PC-9 (cell line): ENCODE measurements at regions of chr4 and their contacts with region 1.

Region 1: DNA sequence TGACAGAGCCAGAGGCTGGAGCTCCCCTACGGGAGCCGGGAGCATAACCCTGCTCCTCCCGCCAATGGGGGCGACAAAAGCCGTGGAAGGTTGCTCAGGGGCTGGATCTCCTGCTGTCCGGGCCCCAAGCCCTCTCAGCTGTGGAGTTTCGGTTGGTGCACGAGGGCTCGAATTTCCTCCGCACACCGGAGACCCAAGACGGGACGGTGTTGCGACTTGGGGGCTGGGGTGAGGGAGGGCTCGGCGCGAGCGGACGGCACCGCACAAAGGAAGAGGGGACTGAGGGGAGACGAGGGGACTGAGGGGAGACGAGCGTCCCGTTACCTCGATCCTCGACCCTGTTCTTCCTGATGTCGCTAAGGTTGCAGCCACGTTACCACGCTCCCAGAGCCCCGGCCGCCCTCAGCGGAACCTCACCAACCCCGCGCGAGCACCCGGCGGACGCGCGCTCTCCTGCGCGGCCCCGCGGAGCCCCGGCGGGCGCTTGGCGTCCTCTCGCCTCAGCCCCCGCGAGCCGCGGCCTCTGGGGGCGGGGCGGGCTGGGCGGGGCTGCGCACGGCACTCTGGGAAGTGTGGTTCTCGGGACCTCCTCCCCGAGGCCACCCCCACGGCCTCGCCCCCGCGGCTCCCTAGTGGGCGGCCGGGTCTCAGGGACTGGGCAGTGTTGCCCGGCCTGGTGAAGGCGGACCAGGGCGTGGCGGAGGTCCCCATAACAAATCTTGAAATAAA is at the start of gene KLHL8:
- DNase-seq: peak; percentile 79 to 92
- H3K4me3 ChIP-seq: peak within 1 kb of the TSS; percentile 93
- H3K27ac ChIP-seq: peak within 1 kb of the TSS; percentile 78
- H3K4me1 ChIP-seq: peaks cover 7% of the 10 kb centered on the region
- H3K27me3 ChIP-seq: no peaks in the 10 kb centered on the region
- CTCF ChIP-seq: no peak
- total RNA-seq, gene KLHL8: 8.5 and 10.4 TPM in 2 replicates

Region 2: DNA sequence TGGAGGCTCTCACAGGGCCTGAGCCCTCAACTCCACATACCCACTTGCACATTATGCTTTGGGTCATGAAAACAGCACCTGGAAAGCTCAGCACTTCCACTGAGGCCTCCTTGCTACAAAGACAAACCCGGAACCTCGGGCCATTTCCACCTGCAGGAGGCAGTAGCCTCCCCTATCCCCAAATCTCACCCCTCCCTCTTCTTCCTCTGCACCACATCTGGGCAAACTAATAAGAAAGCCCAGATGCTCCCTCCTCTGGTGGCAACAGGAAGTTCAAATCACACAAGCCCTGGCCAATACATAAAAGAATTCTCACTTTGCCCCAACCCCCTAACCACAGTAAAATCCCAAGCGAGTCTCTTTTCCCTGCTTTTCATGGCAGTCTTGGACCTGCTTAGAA is 996.8 kb before region 1 on chr4:
- CTCF ChIA-PET with region 1: no interaction called
- POLR2A ChIA-PET with region 1: no interaction called
- intact Hi-C with region 1: no loop called
- DNase-seq: no peak
- H3K4me3 ChIP-seq: no peak overlapping the region
- H3K27ac ChIP-seq: no peak overlapping the region
- H3K4me1 ChIP-seq: no peaks in the 10 kb centered on the region
- H3K27me3 ChIP-seq: no peaks in the 10 kb centered on the region
- CTCF ChIP-seq: peak; percentile 63

Region 3: GRCh38 chr4:86944964-86945781 is 275.1 kb before region 1 on chr4:
- CTCF ChIA-PET with region 1: no interaction called
- POLR2A ChIA-PET with region 1: interaction called, 11 read pairs
- intact Hi-C with region 1: no loop called
- DNase-seq: no peak
- H3K4me3 ChIP-seq: no peak overlapping the region
- H3K27ac ChIP-seq: no peak overlapping the region
- H3K4me1 ChIP-seq: peaks cover 14% of the 10 kb centered on the region
- H3K27me3 ChIP-seq: no peaks in the 10 kb centered on the region
- CTCF ChIP-seq: no peak

Region 4: GRCh38 chr4:87235020-87235671 is 14.9 kb after region 1 on chr4:
- CTCF ChIA-PET with region 1: interaction called, 17 read pairs
- POLR2A ChIA-PET with region 1: no interaction called
- intact Hi-C with region 1: no loop called
- DNase-seq: no peak
- H3K4me3 ChIP-seq: peak overlapping the region; percentile 75; the same call in 1 of the 2 replicates
- H3K27ac ChIP-seq: no peak overlapping the region
- H3K4me1 ChIP-seq: peaks cover 5% of the 10 kb centered on the region
- H3K27me3 ChIP-seq: no peaks in the 10 kb centered on the region
- CTCF ChIP-seq: no peak